CD4-positive, alpha-beta memory T cell (primary cell): ENCODE measurements at regions of chr10 and their contacts with region 1.

Region 1: GRCh38 chr10:95430231-95430951 is 130.8 kb downstream of the SORBS1 start:
- DNase-seq: peak in 4 of 5 donors; percentile 35 to 46 (median 42)
- H3K4me3 ChIP-seq: no peak overlapping the region
- H3K4me3 Mint-ChIP-seq: no peak overlapping the region
- H3K27ac ChIP-seq: no peak overlapping the region
- H3K27ac Mint-ChIP-seq: no peak overlapping the region
- H3K4me1 ChIP-seq: no peaks in the 10 kb centered on the region
- H3K4me1 Mint-ChIP-seq: no peaks in the 10 kb centered on the region
- H3K27me3 ChIP-seq: no peaks in the 10 kb centered on the region
- H3K27me3 Mint-ChIP-seq: no peaks in the 10 kb centered on the region

Region 2: GRCh38 chr10:95183271-95184230 is 246.8 kb before region 1 on chr10:
- CTCF ChIA-PET with region 1: no interaction called
- POLR2A ChIA-PET with region 1: no interaction called
- intact Hi-C with region 1: no loop called
- DNase-seq: peak in 4 of 5 donors; percentile 38 to 55 (median 43)
- H3K4me3 ChIP-seq: peak overlapping the region in 1 of 2 donors; percentile 45
- H3K4me3 Mint-ChIP-seq: peak overlapping the region; percentile 59 to 83 (median 76)
- H3K27ac ChIP-seq: no peak overlapping the region
- H3K27ac Mint-ChIP-seq: peak overlapping the region in 2 of 7 donors; percentile 61 to 86
- H3K4me1 ChIP-seq: no peaks in the 10 kb centered on the region
- H3K4me1 Mint-ChIP-seq: peaks cover 0 to 8% (median 7%) of the 10 kb centered on the region in 4 donors
- H3K27me3 ChIP-seq: peaks cover 5% of the 10 kb centered on the region
- H3K27me3 Mint-ChIP-seq: peaks cover 15 to 20% of the 10 kb centered on the region in 2 donors

Region 3: DNA sequence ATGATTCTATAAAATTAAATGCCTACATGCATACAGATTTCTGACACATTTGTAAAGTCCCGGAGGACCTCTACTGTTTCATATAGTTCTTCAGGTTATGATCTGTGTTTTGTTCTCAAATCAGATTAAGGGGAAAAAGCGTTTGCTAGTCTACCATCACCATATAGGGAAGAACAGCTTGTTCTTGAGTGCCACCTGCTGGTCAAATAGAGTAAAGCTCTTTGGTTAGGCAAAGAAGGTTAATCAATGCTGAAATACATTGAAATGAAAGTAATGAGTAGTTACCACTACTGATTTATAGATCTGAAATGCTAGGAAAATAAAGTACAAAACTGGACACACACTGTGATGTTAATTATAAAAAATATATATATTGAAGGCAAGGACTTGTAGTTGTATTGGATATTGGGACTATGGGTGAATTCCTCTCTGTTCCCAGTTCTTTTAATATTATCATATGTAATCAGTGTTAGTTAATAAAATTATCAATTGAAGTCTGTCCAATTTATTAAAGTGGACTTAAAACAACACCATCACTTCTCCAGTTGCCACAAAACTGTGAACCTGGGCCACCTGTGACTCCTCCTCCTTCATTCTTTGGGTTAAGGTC is 67.0 kb before region 1 on chr10:
- CTCF ChIA-PET with region 1: interaction called, 13 read pairs
- POLR2A ChIA-PET with region 1: no interaction called
- intact Hi-C with region 1: no loop called
- DNase-seq: peak in 4 of 5 donors; percentile 46 to 53 (median 48)
- H3K4me3 ChIP-seq: no peak overlapping the region
- H3K4me3 Mint-ChIP-seq: no peak overlapping the region
- H3K27ac ChIP-seq: no peak overlapping the region
- H3K27ac Mint-ChIP-seq: no peak overlapping the region
- H3K4me1 ChIP-seq: no peaks in the 10 kb centered on the region
- H3K4me1 Mint-ChIP-seq: no peaks in the 10 kb centered on the region
- H3K27me3 ChIP-seq: no peaks in the 10 kb centered on the region
- H3K27me3 Mint-ChIP-seq: peaks cover 7 to 9% of the 10 kb centered on the region in 2 donors

Region 4: GRCh38 chr10:95419399-95419798 is 11.0 kb before region 1 on chr10:
- CTCF ChIA-PET with region 1: interaction called, 48 read pairs
- POLR2A ChIA-PET with region 1: no interaction called
- intact Hi-C with region 1: no loop called
- DNase-seq: no peak
- H3K4me3 ChIP-seq: no peak overlapping the region
- H3K4me3 Mint-ChIP-seq: no peak overlapping the region
- H3K27ac ChIP-seq: no peak overlapping the region
- H3K27ac Mint-ChIP-seq: no peak overlapping the region
- H3K4me1 ChIP-seq: no peaks in the 10 kb centered on the region
- H3K4me1 Mint-ChIP-seq: no peaks in the 10 kb centered on the region
- H3K27me3 ChIP-seq: no peaks in the 10 kb centered on the region
- H3K27me3 Mint-ChIP-seq: peaks cover 0 to 1% of the 10 kb centered on the region in 2 donors

Region 5: GRCh38 chr10:95456516-95456915 is 26.1 kb after region 1 on chr10:
- CTCF ChIA-PET with region 1: interaction called, 19 read pairs
- POLR2A ChIA-PET with region 1: no interaction called
- intact Hi-C with region 1: no loop called
- DNase-seq: no peak
- H3K4me3 ChIP-seq: no peak overlapping the region
- H3K4me3 Mint-ChIP-seq: no peak overlapping the region
- H3K27ac ChIP-seq: no peak overlapping the region
- H3K27ac Mint-ChIP-seq: no peak overlapping the region
- H3K4me1 ChIP-seq: no peaks in the 10 kb centered on the region
- H3K4me1 Mint-ChIP-seq: no peaks in the 10 kb centered on the region
- H3K27me3 ChIP-seq: no peaks in the 10 kb centered on the region
- H3K27me3 Mint-ChIP-seq: peaks cover 5 to 7% of the 10 kb centered on the region in 2 donors

Region 6: DNA sequence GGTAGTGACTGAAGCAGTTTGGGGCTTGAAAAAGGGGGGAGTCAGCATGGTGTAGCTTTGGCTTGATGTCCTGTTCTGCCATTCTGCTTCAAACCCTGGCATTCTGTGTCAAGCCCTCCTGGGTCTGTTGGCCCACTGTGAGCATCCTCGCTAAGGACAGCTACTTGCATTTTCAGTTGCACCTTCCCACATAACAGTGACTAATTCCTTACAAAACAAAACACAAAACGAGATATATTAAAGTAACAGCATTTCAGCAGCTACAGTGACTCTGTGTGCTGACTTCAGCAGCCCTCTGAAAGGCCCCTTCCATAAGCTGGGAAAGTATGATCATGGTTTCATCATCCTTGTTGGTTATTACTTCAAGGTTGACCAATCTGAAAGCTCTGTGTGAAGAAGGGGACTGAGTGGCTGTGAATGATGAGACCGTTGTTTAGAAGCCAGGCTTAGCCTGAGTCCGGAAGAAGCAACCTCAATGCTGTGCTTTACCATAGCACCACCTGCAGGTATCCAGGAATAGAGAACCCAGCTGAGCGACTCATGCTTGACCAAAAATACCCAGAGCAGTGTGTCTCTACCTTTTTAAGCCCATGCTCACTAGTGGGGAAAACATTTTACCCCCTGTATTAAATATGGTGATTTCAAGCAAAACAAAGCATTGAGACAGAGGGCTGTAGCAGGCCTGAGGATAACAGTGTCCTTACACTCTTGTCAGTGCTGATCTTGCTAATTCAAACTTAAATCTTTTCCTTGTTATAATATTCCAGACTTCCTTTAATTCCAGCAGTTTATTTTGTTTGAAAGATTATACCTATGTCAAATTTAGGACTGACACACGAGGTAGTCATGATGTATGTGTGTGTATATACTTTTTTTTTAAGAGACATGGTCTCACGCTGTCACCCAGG is 434.8 kb after region 1 on chr10:
- CTCF ChIA-PET with region 1: interaction called, 5 read pairs
- POLR2A ChIA-PET with region 1: no interaction called
- intact Hi-C with region 1: loop called (anchors 2 kb)
- DNase-seq: peak; percentile 14 to 52 (median 41)
- H3K4me3 ChIP-seq: no peak overlapping the region
- H3K4me3 Mint-ChIP-seq: no peak overlapping the region
- H3K27ac ChIP-seq: no peak overlapping the region
- H3K27ac Mint-ChIP-seq: peak overlapping the region in 3 of 7 donors; percentile 61 to 77 (median 68)
- H3K4me1 ChIP-seq: peaks cover 4% of the 10 kb centered on the region
- H3K4me1 Mint-ChIP-seq: peaks cover 5 to 9% (median 8%) of the 10 kb centered on the region in 4 donors
- H3K27me3 ChIP-seq: no peaks in the 10 kb centered on the region
- H3K27me3 Mint-ChIP-seq: no peaks in the 10 kb centered on the region